Thyroid gland (tissue), 4 donors: ENCODE measurements at regions of chr11 and their contacts with region 1.

Region 1: DNA sequence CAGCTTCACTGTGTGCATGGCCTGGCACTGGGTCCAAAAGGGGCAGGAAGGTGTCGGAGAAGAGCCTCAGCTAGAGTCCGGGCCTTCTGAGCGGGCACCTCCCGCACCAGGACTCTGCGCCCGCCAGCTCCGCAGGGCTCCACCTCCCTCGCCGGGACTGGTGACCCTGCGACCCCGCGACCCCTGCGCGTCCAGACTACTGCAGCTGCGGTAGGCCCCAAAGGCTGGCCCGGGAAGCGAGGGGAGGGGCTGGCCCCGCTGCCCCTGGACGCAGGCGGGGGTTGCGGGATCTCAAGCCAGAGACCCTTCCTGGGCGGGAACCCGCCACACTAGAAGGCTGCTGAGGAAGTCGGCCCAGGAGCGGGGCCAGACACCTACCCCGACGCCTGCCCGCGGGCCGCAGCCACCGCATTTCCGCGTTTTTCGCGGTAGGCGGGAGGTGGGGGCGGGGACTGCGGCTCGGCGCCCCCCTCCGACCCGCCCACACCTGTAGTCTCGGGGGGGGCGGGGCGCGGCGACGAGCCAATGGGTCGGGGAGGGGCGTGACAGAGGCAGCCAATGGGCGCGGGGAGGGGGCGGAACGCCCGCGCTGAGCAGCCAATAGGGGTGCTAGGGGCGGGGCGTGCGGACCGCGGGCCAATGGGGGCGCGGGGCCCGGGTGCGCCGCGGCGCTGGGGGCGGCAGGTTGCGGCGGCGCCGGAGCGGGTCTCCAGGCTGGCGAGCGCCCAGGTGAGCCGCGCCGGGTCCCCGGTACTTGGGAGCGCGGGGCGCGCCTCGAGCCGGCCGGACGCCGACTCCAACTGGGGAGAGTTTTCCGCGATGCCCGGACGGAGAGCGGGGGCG is at the starts of genes LMNTD2 and RASSF7:
- DNase-seq: peak; percentile 93
- H3K4me3 ChIP-seq: peak within 1 kb of the TSS; percentile 29 to 90 (median 50)
- H3K27ac ChIP-seq: peak within 1 kb of the TSS; percentile 19 to 63 (median 50)
- H3K4me1 ChIP-seq: peaks cover 15 to 27% of the 10 kb centered on the region in 2 donors
- H3K27me3 ChIP-seq: no peaks in the 10 kb centered on the region
- CTCF ChIP-seq: no peak
- POLR2A ChIP-seq: peak; percentile 11 to 65
- total RNA-seq, gene LMNTD2: 4.2 to 8.8 (median 6.6) TPM
- total RNA-seq, gene RASSF7: 18.6 to 60.0 (median 24.8) TPM

Region 2: GRCh38 chr11:199782-200181 is 360.7 kb before region 1 on chr11:
- intact Hi-C with region 1: no loop called
- DNase-seq: no peak
- H3K4me3 ChIP-seq: no peak overlapping the region
- H3K27ac ChIP-seq: no peak overlapping the region
- H3K4me1 ChIP-seq: no peaks in the 10 kb centered on the region
- H3K27me3 ChIP-seq: no peaks in the 10 kb centered on the region
- CTCF ChIP-seq: no peak
- POLR2A ChIP-seq: no peak

Region 3: GRCh38 chr11:494761-495536 is 65.6 kb before region 1 on chr11:
- intact Hi-C with region 1: no loop called
- DNase-seq: no peak
- H3K4me3 ChIP-seq: no peak overlapping the region
- H3K27ac ChIP-seq: no peak overlapping the region
- H3K4me1 ChIP-seq: peaks cover 0 to 3% of the 10 kb centered on the region in 2 donors
- H3K27me3 ChIP-seq: no peaks in the 10 kb centered on the region
- CTCF ChIP-seq: no peak
- POLR2A ChIP-seq: no peak

Region 4: GRCh38 chr11:613369-614268 is 53.1 kb after region 1 on chr11:
- intact Hi-C with region 1: loop called (anchors 5 kb)
- DNase-seq: peak; percentile 52 to 68
- H3K4me3 ChIP-seq: no peak overlapping the region
- H3K27ac ChIP-seq: peak overlapping the region in 2 of 3 donors; percentile 73 to 94
- H3K4me1 ChIP-seq: peaks cover 22 to 27% of the 10 kb centered on the region in 2 donors
- H3K27me3 ChIP-seq: no peaks in the 10 kb centered on the region
- CTCF ChIP-seq: no peak
- POLR2A ChIP-seq: no peak